Aorta (tissue), 5 donors: ENCODE measurements at regions of chr6 and their contacts with region 1.

Region 1: DNA sequence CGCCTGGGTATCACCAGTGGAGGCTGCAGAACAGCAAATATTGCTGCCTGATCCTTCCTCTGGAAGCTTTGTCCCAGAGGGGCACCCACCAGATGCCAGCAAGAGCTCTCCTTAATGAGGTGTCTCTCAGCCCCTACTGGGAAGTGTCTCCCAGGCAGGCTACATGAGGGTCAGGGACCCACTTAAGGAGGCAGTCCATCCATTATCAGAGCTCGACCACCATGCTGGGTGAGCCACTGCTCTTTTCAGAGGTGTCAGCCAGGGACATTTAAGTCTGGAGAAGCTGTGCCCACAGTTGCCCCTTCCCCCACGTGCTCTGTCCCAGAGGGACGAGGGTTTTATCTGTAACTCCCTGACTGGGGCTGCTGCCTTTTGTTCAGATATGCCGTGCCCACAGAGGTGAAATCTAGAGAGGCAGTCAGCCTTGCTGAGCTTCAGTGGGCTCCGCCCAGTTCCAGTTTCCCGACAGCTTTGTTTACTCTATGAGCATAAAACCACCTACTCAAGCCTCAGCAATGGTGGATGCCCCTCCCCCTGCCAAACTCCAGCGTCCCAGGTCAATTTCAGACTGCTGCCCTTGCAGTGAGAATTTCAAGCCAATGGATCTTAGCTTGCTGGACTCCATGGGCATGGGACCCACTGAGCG is 25.9 kb upstream of the AIG1 start:
- DNase-seq: no peak
- ATAC-seq: no peak
- H3K4me3 ChIP-seq: no peak overlapping the region
- H3K27ac ChIP-seq: no peak overlapping the region
- H3K4me1 ChIP-seq: no peaks in the 10 kb centered on the region
- H3K27me3 ChIP-seq: no peaks in the 10 kb centered on the region

Region 2: GRCh38 chr6:142985281-142985680 is 49.5 kb before region 1 on chr6:
- intact Hi-C with region 1: loop called in 1 of 2 experiments (anchors 10 kb)
- DNase-seq: no peak
- ATAC-seq: peak; percentile 19
- H3K4me3 ChIP-seq: no peak overlapping the region
- H3K27ac ChIP-seq: no peak overlapping the region
- H3K4me1 ChIP-seq: no peaks in the 10 kb centered on the region
- H3K27me3 ChIP-seq: no peaks in the 10 kb centered on the region

Region 3: GRCh38 chr6:143007646-143008045 is 27.2 kb before region 1 on chr6:
- intact Hi-C with region 1: no loop called
- DNase-seq: no peak
- ATAC-seq: no peak
- H3K4me3 ChIP-seq: no peak overlapping the region
- H3K27ac ChIP-seq: no peak overlapping the region
- H3K4me1 ChIP-seq: no peaks in the 10 kb centered on the region
- H3K27me3 ChIP-seq: no peaks in the 10 kb centered on the region